ENCODE measurements at regions of chr1 and their contacts with region 1.

Region 1: DNA sequence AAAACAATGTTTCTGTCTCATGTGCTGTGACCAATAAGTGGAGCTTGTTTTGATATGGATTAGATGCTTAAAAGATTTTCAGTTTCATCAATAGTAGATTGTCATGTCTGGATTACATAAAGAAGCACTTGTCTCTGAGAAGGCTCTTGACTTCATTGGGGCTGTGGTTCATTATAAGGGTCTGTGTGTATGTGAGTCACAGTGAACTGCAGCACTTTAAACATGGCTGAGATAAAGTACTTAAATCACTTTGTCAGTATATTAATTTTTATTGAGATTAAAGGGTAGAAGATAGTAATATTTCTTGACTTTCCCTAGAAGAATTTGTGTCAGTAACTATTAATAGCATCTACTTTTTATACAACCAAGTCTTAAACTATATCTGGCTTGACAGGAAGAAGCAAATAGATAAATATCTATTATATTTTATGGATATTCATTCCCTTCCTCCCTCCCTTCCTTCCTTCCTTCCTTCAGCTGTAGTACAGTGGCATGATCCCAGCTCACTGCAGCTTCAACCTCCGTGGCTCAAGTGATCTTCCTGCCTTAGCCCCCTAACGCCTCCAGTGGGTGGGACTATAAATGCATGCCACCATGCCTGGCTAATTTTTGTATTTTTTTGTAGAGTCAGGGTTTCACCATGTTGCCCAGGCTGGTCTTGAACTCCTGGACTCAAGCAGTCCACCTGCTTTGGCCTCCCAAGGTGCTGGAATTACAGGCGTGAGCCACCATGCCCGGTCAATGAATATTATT is 48.8 kb downstream of the ZFYVE9 start:
- DNase-seq: no peak
- H3K4me3 ChIP-seq: no peak overlapping the region
- H3K27me3 ChIP-seq: no peaks in the 10 kb centered on the region
- CTCF ChIP-seq: no peak

Region 2: GRCh38 chr1:52127181-52128180 is 63.2 kb before region 1 on chr1:
- CTCF ChIA-PET with region 1: no interaction called
- POLR2A ChIA-PET with region 1: no interaction called
- DNase-seq: no peak
- H3K4me3 ChIP-seq: no peak overlapping the region
- H3K27me3 ChIP-seq: no peaks in the 10 kb centered on the region; the same call in 1 of the 2 replicates
- CTCF ChIP-seq: peak; percentile 85

Region 3: GRCh38 chr1:52240592-52241210 is 50.0 kb after region 1 on chr1:
- CTCF ChIA-PET with region 1: no interaction called
- POLR2A ChIA-PET with region 1: interaction called, 18 read pairs
- DNase-seq: no peak
- H3K4me3 ChIP-seq: no peak overlapping the region
- H3K27me3 ChIP-seq: no peaks in the 10 kb centered on the region
- CTCF ChIP-seq: no peak

Region 4: DNA sequence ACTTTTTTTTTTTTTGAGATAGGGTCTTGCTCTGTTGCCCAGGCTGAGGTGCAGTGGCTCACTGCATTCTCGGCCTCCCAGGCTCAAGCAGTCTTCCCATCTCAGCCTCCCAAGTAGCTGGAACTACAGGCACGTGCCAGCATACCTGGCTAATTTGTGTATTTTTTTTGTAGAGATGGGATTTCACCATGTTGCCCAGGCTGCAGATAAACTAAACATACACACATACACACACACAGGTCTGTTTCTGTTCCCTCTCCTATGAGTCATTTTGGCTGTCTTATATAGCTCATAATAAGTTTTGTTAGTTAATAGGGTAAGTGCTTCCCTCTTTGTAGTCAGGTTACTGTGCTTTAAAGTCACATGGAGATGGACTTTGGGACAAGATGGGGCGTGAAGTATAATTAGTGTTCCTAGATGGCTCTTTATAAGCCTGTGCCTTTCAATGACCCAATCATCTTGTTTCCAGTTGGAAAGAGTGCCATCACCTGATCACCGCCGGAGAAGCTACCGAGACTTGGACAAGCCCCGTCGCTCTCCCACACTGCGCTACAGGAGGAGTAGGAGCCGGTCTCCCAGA is 222.8 kb after region 1 on chr1:
- CTCF ChIA-PET with region 1: no interaction called
- POLR2A ChIA-PET with region 1: no interaction called
- DNase-seq: no peak
- H3K4me3 ChIP-seq: no peak overlapping the region
- H3K27me3 ChIP-seq: no peaks in the 10 kb centered on the region
- CTCF ChIP-seq: no peak